ENCODE measurements at regions of chr18 and their contacts with region 1.

Region 1: DNA sequence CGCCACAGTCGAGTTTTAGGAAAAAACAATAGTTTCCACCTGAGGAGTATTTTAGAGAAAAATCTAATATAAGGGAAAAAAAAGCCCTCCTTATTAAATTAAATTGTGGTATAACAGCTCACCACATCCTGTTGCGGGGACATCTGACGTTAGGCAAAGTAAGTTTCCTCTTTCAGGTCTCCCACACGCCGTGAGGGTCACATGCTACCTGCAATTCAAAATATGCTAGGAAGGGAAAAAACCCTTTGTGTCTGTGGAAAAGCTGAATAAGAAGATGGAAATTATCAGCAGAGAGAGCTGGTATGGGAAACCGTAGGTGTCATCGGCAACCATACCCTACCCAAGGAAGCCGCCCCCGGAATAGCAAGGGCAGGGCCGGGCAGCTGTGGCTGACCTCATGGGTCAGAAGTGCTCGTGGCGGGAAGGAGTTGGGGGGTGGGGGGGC is 128.0 kb downstream of the NFATC1 start:
- DNase-seq: peak; percentile 92
- H3K4me3 Mint-ChIP-seq: peak overlapping the region; percentile 83
- H3K27ac Mint-ChIP-seq: peak overlapping the region; percentile 100
- H3K4me1 Mint-ChIP-seq: peaks cover 73% of the 10 kb centered on the region
- H3K27me3 Mint-ChIP-seq: no peaks in the 10 kb centered on the region

Region 2: DNA sequence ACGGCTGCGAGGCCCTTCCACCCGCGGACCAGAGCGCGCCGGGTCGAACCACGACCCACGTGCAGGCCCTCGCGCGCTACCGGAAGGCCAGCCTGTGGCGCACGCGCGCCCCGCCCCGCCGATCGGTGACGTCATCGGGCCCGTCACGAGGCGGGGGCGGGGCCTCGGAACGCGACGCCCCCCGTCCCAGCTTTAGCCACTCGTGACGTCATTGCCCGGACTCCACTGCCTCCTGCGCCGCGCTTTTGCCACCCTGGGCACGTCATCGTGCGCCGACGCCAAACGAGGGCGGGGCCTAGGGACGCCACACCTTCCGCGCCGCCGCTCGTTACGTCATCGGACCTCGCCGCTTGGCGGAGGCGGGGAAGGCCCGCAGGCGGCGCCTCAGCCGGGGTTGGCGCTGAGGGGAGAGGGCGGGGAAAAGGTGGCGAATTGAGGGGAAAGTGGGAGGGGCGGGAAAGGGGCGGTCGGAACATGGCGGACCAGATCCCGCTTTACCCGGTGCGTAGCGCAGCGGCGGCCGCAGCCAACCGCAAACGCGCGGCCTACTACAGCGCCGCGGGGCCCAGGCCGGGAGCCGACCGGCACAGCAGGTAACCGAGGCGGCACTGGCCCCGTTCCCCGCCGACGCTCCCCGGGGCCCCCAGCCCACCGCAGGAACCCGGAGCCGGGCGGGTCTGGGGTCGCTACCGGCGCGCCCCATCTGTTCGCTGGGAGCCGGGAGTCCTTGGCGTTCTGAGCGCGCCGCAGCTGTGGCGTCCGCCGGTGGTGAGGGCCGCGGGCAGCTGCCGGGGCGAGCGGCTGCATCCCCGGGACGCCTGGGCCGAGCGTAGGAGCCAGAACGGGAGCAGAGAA is 454.6 kb before region 1 on chr18 and contains the start of gene ATP9B:
- CTCF ChIA-PET with region 1: no interaction called
- intact Hi-C with region 1: loop called (anchors 5 kb)
- DNase-seq: peak; percentile 98
- H3K4me3 Mint-ChIP-seq: peak within 1 kb of the TSS; percentile 91
- H3K27ac Mint-ChIP-seq: peak within 1 kb of the TSS; percentile 97
- H3K4me1 Mint-ChIP-seq: peaks cover 33% of the 10 kb centered on the region
- H3K27me3 Mint-ChIP-seq: peaks cover 3% of the 10 kb centered on the region
- total RNA-seq, gene ATP9B: 18.6 to 19.1 TPM

Region 3: GRCh38 chr18:79366177-79367094 is 157.3 kb before region 1 on chr18:
- CTCF ChIA-PET with region 1: no interaction called
- intact Hi-C with region 1: no loop called
- DNase-seq: no peak
- H3K4me3 Mint-ChIP-seq: no peak overlapping the region
- H3K27ac Mint-ChIP-seq: no peak overlapping the region
- H3K4me1 Mint-ChIP-seq: peaks cover 21% of the 10 kb centered on the region
- H3K27me3 Mint-ChIP-seq: no peaks in the 10 kb centered on the region

Region 4: DNA sequence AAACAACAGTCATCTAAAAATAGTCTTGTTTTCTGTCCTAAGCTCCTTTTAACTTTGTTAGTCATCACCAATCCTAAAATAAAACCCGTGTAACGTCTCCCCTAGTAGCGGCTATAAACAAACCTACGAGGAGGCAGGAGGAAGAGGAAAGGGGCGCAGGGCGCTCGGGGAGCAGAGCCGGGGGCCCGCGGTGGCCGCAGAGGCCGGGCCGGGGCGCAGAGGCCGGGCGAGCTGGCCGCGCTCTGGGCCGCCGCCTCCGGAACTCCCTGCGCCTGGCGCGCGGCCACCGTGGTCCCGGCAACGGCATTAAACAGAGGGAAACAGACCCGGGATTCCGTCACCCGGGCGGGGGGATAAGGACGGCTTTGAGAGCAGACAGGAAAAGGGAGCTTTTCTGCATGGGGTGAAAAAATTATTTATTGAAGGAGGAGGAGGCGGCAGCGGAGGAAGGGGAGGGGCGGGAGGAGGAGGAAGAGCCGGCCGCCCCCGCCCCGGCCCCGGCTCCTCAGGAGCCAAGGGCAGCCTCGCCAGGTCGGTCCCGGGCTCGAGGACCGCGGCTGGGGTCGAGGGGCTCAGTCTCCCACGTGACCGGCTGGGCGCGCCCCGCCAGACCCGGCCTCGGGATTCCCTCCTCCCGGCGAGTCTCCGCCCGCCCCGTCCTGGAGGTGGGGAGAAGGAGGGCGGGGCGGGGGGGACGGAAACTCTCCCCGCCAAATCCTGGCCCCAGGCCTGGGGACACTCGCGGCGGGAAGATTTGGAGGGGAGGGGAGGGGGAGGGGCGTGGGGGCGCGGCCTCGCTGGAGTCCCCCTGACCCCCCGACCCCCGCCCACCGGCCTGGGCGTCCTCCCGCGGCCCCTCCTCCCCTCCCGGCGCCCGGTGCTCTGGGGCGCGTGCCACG is 129.9 kb before region 1 on chr18:
- CTCF ChIA-PET with region 1: interaction called, 8 read pairs
- intact Hi-C with region 1: loop called (anchors 1 kb)
- DNase-seq: peak; percentile 73
- H3K4me3 Mint-ChIP-seq: peak overlapping the region; percentile 74
- H3K27ac Mint-ChIP-seq: peak overlapping the region; percentile 71
- H3K4me1 Mint-ChIP-seq: peaks cover 34% of the 10 kb centered on the region
- H3K27me3 Mint-ChIP-seq: peaks cover 5% of the 10 kb centered on the region

Region 5: GRCh38 chr18:79476918-79477571 is 46.7 kb before region 1 on chr18:
- CTCF ChIA-PET with region 1: interaction called, 4 read pairs
- intact Hi-C with region 1: loop called (anchors 5 kb)
- DNase-seq: no peak
- H3K4me3 Mint-ChIP-seq: no peak overlapping the region
- H3K27ac Mint-ChIP-seq: peak overlapping the region; percentile 11
- H3K4me1 Mint-ChIP-seq: peaks cover 15% of the 10 kb centered on the region
- H3K27me3 Mint-ChIP-seq: no peaks in the 10 kb centered on the region

Region 6: DNA sequence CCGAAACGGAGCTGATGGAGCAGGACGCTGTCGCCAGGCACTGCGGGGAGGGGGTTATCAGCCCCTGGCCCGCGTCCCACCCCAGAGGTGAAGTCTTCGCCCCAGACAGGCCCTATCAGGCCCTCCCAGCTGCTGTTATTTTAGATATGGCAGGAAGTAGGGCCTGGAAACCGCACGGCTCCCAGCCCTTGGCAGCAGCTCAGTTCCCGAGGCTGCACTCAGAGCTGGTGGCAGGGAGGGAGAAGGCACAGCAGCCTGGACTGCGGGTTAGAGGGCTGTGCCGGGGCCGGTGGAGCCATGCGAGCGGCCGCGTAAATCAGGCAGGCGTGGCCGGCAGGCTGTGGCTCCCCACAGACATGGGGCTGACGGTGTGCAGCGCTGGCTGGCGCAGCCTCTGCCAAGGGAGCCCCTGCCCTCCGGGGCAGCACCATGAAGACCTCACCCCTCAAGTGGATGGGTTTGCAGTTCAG is 16.6 kb before region 1 on chr18:
- CTCF ChIA-PET with region 1: interaction called, 5 read pairs
- intact Hi-C with region 1: loop called (anchors 2 kb)
- DNase-seq: peak; percentile 57
- H3K4me3 Mint-ChIP-seq: peak overlapping the region; percentile 64
- H3K27ac Mint-ChIP-seq: peak overlapping the region; percentile 89
- H3K4me1 Mint-ChIP-seq: peaks cover 65% of the 10 kb centered on the region
- H3K27me3 Mint-ChIP-seq: no peaks in the 10 kb centered on the region

Region 7: GRCh38 chr18:79988451-79989194 is 464.9 kb after region 1 on chr18 and contains the start of gene TXNL4A:
- CTCF ChIA-PET with region 1: no interaction called
- intact Hi-C with region 1: loop called (anchors 2 kb)
- DNase-seq: peak; percentile 84
- H3K4me3 Mint-ChIP-seq: peak within 1 kb of the TSS; percentile 85
- H3K27ac Mint-ChIP-seq: peak within 1 kb of the TSS; percentile 85
- H3K4me1 Mint-ChIP-seq: peaks cover 35% of the 10 kb centered on the region
- H3K27me3 Mint-ChIP-seq: no peaks in the 10 kb centered on the region
- total RNA-seq, gene TXNL4A: 185 to 186 TPM